ENCODE measurements at regions of chr5 and their contacts with region 1.

Region 1: DNA sequence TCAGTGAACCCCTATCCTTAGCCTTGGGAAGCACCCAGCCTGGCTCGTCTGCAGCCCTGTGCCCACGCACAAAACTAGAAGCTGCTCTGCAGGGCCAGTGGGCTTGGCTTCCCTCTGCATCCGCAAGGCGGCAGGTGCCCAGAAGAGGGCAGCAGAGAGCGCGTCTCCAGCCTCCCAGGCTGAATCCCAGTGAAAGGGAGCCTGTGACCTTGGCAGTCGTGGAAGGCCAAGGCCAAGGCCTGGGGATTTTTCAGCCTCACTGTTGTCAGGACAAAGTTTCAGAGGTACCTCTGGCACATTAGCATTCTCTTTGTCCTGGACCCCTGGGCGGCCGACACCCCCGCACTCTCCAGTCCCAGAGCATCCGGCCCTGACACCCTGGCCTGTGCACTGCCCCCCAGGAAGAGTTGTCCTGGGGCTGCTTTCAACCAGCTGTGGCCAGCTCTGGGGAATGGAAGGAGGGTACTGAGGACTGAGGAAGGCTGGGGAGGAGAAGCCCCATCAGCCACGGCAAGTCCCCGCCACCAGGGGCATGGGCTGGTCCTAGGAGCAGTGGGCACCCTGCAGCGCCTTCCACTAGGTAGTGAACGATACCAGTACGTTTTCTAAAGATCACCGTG is 63.6 kb upstream of the IL17B start:
- DNase-seq: peak; percentile 39 to 83 (median 66)
- ATAC-seq: peak; percentile 89
- H3K4me3 ChIP-seq: no peak overlapping the region
- H3K4me3 Mint-ChIP-seq: no peak overlapping the region
- H3K27ac ChIP-seq: no peak overlapping the region
- H3K27ac Mint-ChIP-seq: no peak overlapping the region
- H3K4me1 ChIP-seq: no peaks in the 10 kb centered on the region
- H3K4me1 Mint-ChIP-seq: peaks cover 2% of the 10 kb centered on the region
- H3K27me3 ChIP-seq: no peaks in the 10 kb centered on the region
- H3K27me3 Mint-ChIP-seq: peaks cover 3% of the 10 kb centered on the region
- CTCF ChIP-seq: peak; percentile 80

Region 2: GRCh38 chr5:149268928-149269557 is 173.6 kb before region 1 on chr5:
- CTCF ChIA-PET with region 1: no interaction called
- POLR2A ChIA-PET with region 1: no interaction called
- intact Hi-C with region 1: no loop called
- DNase-seq: peak in 2 of 9 experiments; percentile 53 to 63
- ATAC-seq: peak; percentile 45
- H3K4me3 ChIP-seq: no peak overlapping the region
- H3K4me3 Mint-ChIP-seq: no peak overlapping the region
- H3K27ac ChIP-seq: no peak overlapping the region
- H3K27ac Mint-ChIP-seq: no peak overlapping the region
- H3K4me1 ChIP-seq: peaks cover 14% of the 10 kb centered on the region
- H3K4me1 Mint-ChIP-seq: peaks cover 15% of the 10 kb centered on the region
- H3K27me3 ChIP-seq: peaks cover 0 to 12% of the 10 kb centered on the region in 2 experiments
- H3K27me3 Mint-ChIP-seq: peaks cover 28% of the 10 kb centered on the region
- CTCF ChIP-seq: peak; percentile 74

Region 3: GRCh38 chr5:149392718-149393117 is 50.0 kb before region 1 on chr5:
- CTCF ChIA-PET with region 1: no interaction called
- POLR2A ChIA-PET with region 1: no interaction called
- intact Hi-C with region 1: no loop called
- DNase-seq: no peak
- ATAC-seq: no peak
- H3K4me3 ChIP-seq: no peak overlapping the region
- H3K4me3 Mint-ChIP-seq: no peak overlapping the region
- H3K27ac ChIP-seq: no peak overlapping the region
- H3K27ac Mint-ChIP-seq: no peak overlapping the region
- H3K4me1 ChIP-seq: no peaks in the 10 kb centered on the region
- H3K4me1 Mint-ChIP-seq: no peaks in the 10 kb centered on the region
- H3K27me3 ChIP-seq: no peaks in the 10 kb centered on the region
- H3K27me3 Mint-ChIP-seq: no peaks in the 10 kb centered on the region
- CTCF ChIP-seq: no peak

Region 4: GRCh38 chr5:149567226-149567625 is 124.6 kb after region 1 on chr5:
- CTCF ChIA-PET with region 1: interaction called, 69 read pairs
- POLR2A ChIA-PET with region 1: no interaction called
- intact Hi-C with region 1: loop called in 1 of 2 experiments (anchors 1 kb)
- DNase-seq: no peak
- ATAC-seq: no peak
- H3K4me3 ChIP-seq: no peak overlapping the region
- H3K4me3 Mint-ChIP-seq: no peak overlapping the region
- H3K27ac ChIP-seq: no peak overlapping the region
- H3K27ac Mint-ChIP-seq: no peak overlapping the region
- H3K4me1 ChIP-seq: no peaks in the 10 kb centered on the region
- H3K4me1 Mint-ChIP-seq: peaks cover 9% of the 10 kb centered on the region
- H3K27me3 ChIP-seq: no peaks in the 10 kb centered on the region
- H3K27me3 Mint-ChIP-seq: no peaks in the 10 kb centered on the region
- CTCF ChIP-seq: no peak